Heart left ventricle (tissue), 16 donors: ENCODE measurements at regions of chr15 and their contacts with region 1.

Region 1: GRCh38 chr15:33086507-33087121 is 107.9 kb downstream of the FMN1 start:
- DNase-seq: no peak
- ATAC-seq: peak in 2 of 4 donors; percentile 63 to 75
- H3K4me3 ChIP-seq: no peak overlapping the region
- H3K27ac ChIP-seq: no peak overlapping the region
- H3K4me1 ChIP-seq: peaks cover 0 to 15% (median 0%) of the 10 kb centered on the region in 12 donors
- H3K27me3 ChIP-seq: no peaks in the 10 kb centered on the region
- CTCF ChIP-seq: peak; percentile 32 to 70 (median 52)
- POLR2A ChIP-seq: no peak

Region 2: GRCh38 chr15:33021806-33022389 is 64.7 kb before region 1 on chr15:
- intact Hi-C with region 1: loop called in 1 of 10 experiments (anchors 10 kb)
- DNase-seq: no peak
- ATAC-seq: peak; percentile 50 to 84 (median 69)
- H3K4me3 ChIP-seq: no peak overlapping the region
- H3K27ac ChIP-seq: peak overlapping the region in 11 of 12 donors; percentile 50 to 80 (median 63)
- H3K4me1 ChIP-seq: peaks cover 0 to 30% (median 9%) of the 10 kb centered on the region in 12 donors
- H3K27me3 ChIP-seq: no peaks in the 10 kb centered on the region
- CTCF ChIP-seq: peak; percentile 38 to 70 (median 56)
- POLR2A ChIP-seq: no peak

Region 3: GRCh38 chr15:33204926-33205325 is 118.3 kb after region 1 on chr15:
- intact Hi-C with region 1: no loop called
- DNase-seq: no peak
- ATAC-seq: no peak
- H3K4me3 ChIP-seq: no peak overlapping the region
- H3K27ac ChIP-seq: no peak overlapping the region
- H3K4me1 ChIP-seq: peaks cover 0 to 9% (median 0%) of the 10 kb centered on the region in 12 donors
- H3K27me3 ChIP-seq: no peaks in the 10 kb centered on the region
- CTCF ChIP-seq: no peak
- POLR2A ChIP-seq: no peak

Region 4: GRCh38 chr15:33215941-33216872 is 129.6 kb after region 1 on chr15:
- intact Hi-C with region 1: loop called in 1 of 10 experiments (anchors 5 kb)
- DNase-seq: no peak
- ATAC-seq: peak in 1 of 4 donors; percentile 15
- H3K4me3 ChIP-seq: no peak overlapping the region
- H3K27ac ChIP-seq: no peak overlapping the region
- H3K4me1 ChIP-seq: no peaks in the 10 kb centered on the region
- H3K27me3 ChIP-seq: peaks cover 0 to 4% (median 0%) of the 10 kb centered on the region in 9 donors
- CTCF ChIP-seq: peak; percentile 18 to 55 (median 31)
- POLR2A ChIP-seq: no peak